Dendritic cell treated with granulocyte-macrophage colony-stimulating factor and Interleukin-4, amounts not matched to agents 40 ng/mL and 50 ng/mL, for 4 days (primary cell): ENCODE measurements at regions of chr9 and their contacts with region 1.

Region 1: DNA sequence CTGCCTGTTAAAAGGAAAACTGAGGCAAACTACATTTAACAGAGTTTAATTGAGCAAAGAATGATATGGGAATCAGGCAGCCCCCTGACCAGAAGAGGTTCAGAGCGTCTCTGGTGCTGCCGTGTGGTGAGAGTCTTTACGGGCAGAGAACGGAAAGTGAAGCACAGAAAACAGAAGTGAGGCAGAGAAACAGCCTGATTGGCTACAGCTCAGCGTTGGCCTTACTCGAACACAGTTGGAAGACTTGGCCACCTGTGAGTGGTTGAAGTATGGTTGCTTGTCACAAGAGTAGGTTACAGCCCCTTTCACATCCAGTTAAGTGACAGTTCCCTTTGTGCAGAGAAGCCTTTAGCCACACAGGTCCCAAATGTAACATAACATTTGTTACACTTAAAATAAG is 16.9 kb upstream of the FBP1 start:
- H3K4me3 Mint-ChIP-seq: peak overlapping the region; percentile 53
- H3K27ac Mint-ChIP-seq: peak overlapping the region; percentile 85
- H3K4me1 Mint-ChIP-seq: peaks cover 70% of the 10 kb centered on the region
- H3K27me3 Mint-ChIP-seq: no peaks in the 10 kb centered on the region

Region 2: GRCh38 chr9:94639061-94639998 is 16.9 kb before region 1 on chr9 and contains the start of gene FBP1:
- intact Hi-C with region 1: loop called (anchors 2 kb)
- H3K4me3 Mint-ChIP-seq: peak within 1 kb of the TSS; percentile 88
- H3K27ac Mint-ChIP-seq: peak within 1 kb of the TSS; percentile 87
- H3K4me1 Mint-ChIP-seq: peaks cover 51% of the 10 kb centered on the region
- H3K27me3 Mint-ChIP-seq: no peaks in the 10 kb centered on the region

Region 3: GRCh38 chr9:94726495-94727191 is 70.4 kb after region 1 on chr9 and contains the start of gene AOPEP:
- intact Hi-C with region 1: loop called (anchors 10 kb)
- H3K4me3 Mint-ChIP-seq: peak within 1 kb of the TSS; percentile 85
- H3K27ac Mint-ChIP-seq: peak within 1 kb of the TSS; percentile 92
- H3K4me1 Mint-ChIP-seq: peaks cover 17% of the 10 kb centered on the region
- H3K27me3 Mint-ChIP-seq: peaks cover 2% of the 10 kb centered on the region